ENCODE measurements at regions of chr14 and their contacts with region 1.

Region 1: DNA sequence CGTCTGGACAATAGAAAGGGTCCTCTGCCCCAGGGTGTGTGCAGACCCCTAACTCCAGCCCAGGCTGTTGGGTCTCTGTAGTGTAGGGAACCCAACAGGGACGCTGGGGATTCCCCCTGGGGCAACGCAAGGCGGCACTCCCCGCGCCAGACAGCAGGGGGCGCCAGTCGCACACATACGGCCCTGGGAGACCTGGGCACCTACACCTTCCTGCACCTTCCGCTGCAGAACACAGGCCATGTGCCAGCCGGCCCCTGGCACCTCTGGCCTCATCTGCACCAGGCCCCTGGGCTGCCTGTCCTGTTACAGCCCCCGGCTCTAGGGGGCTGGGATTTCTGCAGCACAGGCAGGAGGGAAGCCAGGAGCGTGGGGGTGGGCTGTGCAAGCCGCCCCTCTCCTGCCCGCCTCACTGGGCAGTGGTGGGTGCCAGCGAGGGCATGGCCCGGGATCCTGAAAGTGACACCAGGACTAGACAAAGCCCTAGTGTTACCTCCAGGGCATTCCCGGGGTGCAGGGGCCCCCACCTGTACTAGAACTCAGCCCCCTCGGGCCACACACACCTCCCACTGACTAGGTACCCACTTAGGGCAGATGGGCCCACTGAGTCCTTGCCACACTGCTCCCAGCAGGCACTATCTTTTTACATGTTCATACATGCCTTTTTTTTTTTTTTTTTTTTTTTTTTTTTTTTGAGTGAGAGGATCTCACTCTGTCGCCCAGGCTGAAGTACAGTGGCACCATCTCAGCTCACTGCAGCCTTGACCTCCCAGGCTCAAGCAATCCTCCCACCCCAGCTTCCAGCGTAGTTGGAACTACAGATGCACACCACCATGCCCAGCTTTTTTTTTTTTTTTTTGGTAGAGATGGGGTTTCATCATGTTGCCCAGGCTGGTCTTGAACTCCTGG is 37.5 kb downstream of the CCNK start:
- DNase-seq: peak; percentile 86
- ATAC-seq: peak; percentile 84

Region 2: GRCh38 chr14:99230208-99231151 is 288.2 kb before region 1 on chr14:
- intact Hi-C with region 1: no loop called
- DNase-seq: no peak
- ATAC-seq: no peak

Region 3: DNA sequence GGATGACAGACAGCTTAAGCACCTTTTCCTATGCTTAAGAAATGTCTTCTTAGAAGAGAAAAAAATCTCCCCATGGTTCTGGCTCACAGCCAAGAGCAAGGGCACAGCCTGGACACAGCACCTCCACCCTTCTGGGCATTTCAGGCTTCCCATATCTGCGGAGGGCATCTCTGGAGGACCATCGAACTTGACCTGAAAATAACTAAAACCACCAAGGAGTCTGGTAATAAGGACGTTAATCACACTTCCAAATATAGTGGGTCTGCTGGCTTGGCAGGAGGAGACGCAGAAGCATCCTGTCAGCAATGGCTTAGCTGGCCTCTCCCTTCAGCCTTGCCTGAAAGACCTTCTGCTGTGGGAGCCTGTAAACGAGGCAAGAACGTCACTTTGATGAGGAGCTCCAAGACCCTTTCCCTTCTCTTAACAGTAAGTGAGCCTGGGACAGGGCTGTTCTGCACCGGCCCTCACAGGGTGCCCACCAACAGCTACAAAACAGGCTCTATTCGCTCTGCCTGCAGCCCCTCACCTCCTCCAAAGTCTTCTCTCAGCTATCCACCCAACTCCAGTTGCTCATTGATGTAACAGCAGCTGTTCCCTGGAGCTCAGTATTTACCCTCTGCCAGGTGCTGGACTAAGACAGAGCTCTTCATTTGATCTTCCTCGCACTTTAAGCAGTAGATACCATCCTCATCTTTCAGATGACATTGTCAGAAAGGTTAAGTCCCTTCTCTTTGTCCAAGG is 51.2 kb before region 1 on chr14:
- intact Hi-C with region 1: no loop called
- DNase-seq: no peak
- ATAC-seq: peak; percentile 67

Region 4: GRCh38 chr14:99628832-99629618 is 110.3 kb after region 1 on chr14:
- intact Hi-C with region 1: loop called (anchors 2 kb)
- DNase-seq: peak; percentile 87
- ATAC-seq: peak; percentile 98

Region 5: DNA sequence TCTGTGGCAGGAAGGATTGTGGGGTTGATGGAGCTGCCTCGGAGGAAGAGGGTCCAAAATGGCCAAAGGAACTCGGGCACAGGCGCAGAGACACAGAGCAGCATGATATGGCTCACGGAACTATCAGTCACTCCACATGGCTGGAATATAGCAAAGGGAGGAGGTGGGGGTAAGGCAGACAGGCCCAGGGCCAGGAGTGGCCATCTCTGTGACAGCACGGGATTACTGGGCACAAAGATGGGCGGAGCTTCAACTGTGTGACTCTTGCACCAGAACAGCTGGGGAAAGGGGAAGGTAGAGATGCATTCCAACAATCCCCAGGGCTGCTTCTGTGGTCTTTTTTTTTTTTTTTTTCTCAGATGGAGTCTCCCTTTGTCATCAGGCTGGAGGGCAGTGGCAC is 249.7 kb after region 1 on chr14:
- intact Hi-C with region 1: no loop called
- DNase-seq: no peak
- ATAC-seq: peak; percentile 28